Activated CD4-positive, alpha-beta memory T cell treated with anti-CD3 and anti-CD28 coated beads for 36 hours (primary cell): ENCODE measurements at regions of chr11 and their contacts with region 1.

Region 1: GRCh38 chr11:12149672-12150225 is 39.4 kb downstream of the MICAL2 start:
- DNase-seq: peak; percentile 83
- H3K4me3 Mint-ChIP-seq: peak overlapping the region; percentile 30
- H3K27ac Mint-ChIP-seq: peak overlapping the region; percentile 93
- H3K4me1 Mint-ChIP-seq: peaks cover 63% of the 10 kb centered on the region
- H3K27me3 Mint-ChIP-seq: no peaks in the 10 kb centered on the region

Region 2: GRCh38 chr11:11856638-11857037 is 293.1 kb before region 1 on chr11:
- CTCF ChIA-PET with region 1: no interaction called
- POLR2A ChIA-PET with region 1: no interaction called
- intact Hi-C with region 1: no loop called
- DNase-seq: no peak
- H3K4me3 Mint-ChIP-seq: no peak overlapping the region
- H3K27ac Mint-ChIP-seq: peak overlapping the region; percentile 62
- H3K4me1 Mint-ChIP-seq: peaks cover 55% of the 10 kb centered on the region
- H3K27me3 Mint-ChIP-seq: no peaks in the 10 kb centered on the region

Region 3: DNA sequence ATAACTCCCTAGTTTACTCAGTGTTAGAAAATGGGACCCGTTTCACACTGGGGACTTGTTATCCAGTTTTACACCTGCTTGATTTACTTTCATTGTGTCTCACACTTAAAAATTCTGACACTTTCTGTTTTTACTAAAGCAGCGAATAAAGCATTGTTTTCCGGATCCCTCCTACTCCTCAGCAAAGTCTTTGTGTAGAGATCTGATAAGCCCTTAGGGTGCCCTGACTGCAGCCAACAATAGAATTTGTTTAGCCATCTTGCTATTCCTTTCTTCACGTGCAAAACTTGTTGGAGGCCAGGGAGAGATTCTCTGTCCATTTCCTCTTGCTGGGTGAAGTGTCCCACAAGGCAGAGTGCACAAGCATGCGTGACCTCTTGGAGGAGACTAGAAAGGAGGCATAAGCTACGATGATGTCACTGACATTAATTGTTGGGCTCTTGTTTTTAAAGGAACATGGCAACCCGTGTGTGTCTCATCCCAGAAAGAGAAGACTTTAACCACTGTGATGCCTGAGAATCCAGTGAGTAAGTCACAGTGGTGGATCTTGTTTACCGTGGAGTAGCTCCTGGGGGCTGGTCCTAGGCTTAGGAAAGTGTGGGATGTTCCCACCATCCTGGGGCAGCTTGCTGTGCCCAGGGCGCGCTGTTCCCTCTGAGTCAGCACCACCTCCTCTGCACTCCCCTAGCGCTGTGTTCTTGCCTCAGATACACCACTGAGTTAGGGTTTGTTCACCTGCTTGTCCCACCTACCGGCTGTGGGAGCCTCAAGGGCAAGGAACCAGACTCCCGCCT is 11.6 kb before region 1 on chr11:
- CTCF ChIA-PET with region 1: no interaction called
- POLR2A ChIA-PET with region 1: interaction called, 8 read pairs
- intact Hi-C with region 1: loop called (anchors 1 kb)
- DNase-seq: no peak
- H3K4me3 Mint-ChIP-seq: no peak overlapping the region
- H3K27ac Mint-ChIP-seq: peak overlapping the region; percentile 71
- H3K4me1 Mint-ChIP-seq: peaks cover 64% of the 10 kb centered on the region
- H3K27me3 Mint-ChIP-seq: no peaks in the 10 kb centered on the region

Region 4: GRCh38 chr11:12174477-12175143 is 24.9 kb after region 1 on chr11:
- CTCF ChIA-PET with region 1: interaction called, 5 read pairs
- POLR2A ChIA-PET with region 1: interaction called, 17 read pairs
- intact Hi-C with region 1: loop called (anchors 1 kb)
- DNase-seq: no peak
- H3K4me3 Mint-ChIP-seq: peak overlapping the region; percentile 27
- H3K27ac Mint-ChIP-seq: peak overlapping the region; percentile 93
- H3K4me1 Mint-ChIP-seq: peaks cover 68% of the 10 kb centered on the region
- H3K27me3 Mint-ChIP-seq: no peaks in the 10 kb centered on the region

Region 5: DNA sequence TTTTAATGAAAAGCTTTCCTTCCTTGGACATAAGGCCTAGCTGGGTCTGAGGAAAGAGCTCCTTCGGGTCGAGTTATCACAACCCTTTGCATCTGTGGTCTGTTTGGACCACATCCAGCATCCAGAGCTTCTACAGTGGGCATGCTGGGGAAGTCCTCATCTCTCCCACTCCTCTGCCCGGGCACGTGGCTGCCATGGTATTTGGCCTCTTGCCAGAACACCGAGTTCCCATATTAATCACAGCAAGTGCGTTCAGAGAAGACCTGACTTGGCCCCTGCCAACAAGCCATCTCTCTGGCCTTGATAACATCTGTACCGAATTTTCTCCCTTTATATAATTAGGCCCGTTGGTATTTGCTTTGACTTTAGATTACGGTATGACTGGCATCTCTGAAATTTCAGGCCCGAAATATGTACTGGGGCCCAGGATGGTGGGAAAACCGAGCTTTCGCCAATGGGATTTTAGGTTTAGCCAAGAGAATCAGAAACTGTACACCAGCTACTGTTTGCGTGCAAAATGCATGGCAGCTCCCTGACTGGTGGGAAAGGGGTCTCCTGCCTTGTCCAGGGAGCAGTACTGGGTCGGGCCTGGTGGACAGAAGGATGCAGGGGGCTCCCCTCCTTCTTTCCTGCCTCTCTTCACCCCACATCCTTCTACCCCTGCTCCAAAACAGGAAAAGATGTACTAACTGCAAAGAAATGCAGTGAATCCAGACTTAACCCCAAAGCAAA is 50.7 kb after region 1 on chr11:
- CTCF ChIA-PET with region 1: interaction called, 7 read pairs
- POLR2A ChIA-PET with region 1: interaction called, 26 read pairs
- intact Hi-C with region 1: loop called (anchors 2 kb)
- DNase-seq: peak; percentile 72
- H3K4me3 Mint-ChIP-seq: peak overlapping the region; percentile 26
- H3K27ac Mint-ChIP-seq: peak overlapping the region; percentile 98
- H3K4me1 Mint-ChIP-seq: peaks cover 89% of the 10 kb centered on the region
- H3K27me3 Mint-ChIP-seq: no peaks in the 10 kb centered on the region

Region 6: GRCh38 chr11:12224537-12224893 is 74.8 kb after region 1 on chr11:
- CTCF ChIA-PET with region 1: interaction called, 3 read pairs
- POLR2A ChIA-PET with region 1: interaction called, 13 read pairs
- intact Hi-C with region 1: loop called (anchors 1 kb)
- DNase-seq: peak; percentile 98
- H3K4me3 Mint-ChIP-seq: peak overlapping the region; percentile 78
- H3K27ac Mint-ChIP-seq: peak overlapping the region; percentile 98
- H3K4me1 Mint-ChIP-seq: peaks cover 52% of the 10 kb centered on the region
- H3K27me3 Mint-ChIP-seq: no peaks in the 10 kb centered on the region

Region 7: GRCh38 chr11:13289081-13289480 is 1139.3 kb after region 1 on chr11:
- CTCF ChIA-PET with region 1: no interaction called
- POLR2A ChIA-PET with region 1: no interaction called
- intact Hi-C with region 1: loop called (anchors 5 kb)
- DNase-seq: no peak
- H3K4me3 Mint-ChIP-seq: no peak overlapping the region
- H3K27ac Mint-ChIP-seq: no peak overlapping the region
- H3K4me1 Mint-ChIP-seq: peaks cover 81% of the 10 kb centered on the region
- H3K27me3 Mint-ChIP-seq: no peaks in the 10 kb centered on the region